ENCODE measurements at regions of chr1 and their contacts with region 1.

Region 1: GRCh38 chr1:75991497-75992114 is 59.4 kb upstream of the ASB17 start:
- DNase-seq: peak; percentile 89
- H3K4me3 Mint-ChIP-seq: no peak overlapping the region
- H3K27ac Mint-ChIP-seq: no peak overlapping the region
- H3K4me1 Mint-ChIP-seq: no peaks in the 10 kb centered on the region
- H3K27me3 Mint-ChIP-seq: peaks cover 12% of the 10 kb centered on the region
- CTCF ChIP-seq: peak; percentile 57

Region 2: GRCh38 chr1:75908717-75909152 is 82.9 kb before region 1 on chr1:
- CTCF ChIA-PET with region 1: no interaction called
- intact Hi-C with region 1: loop called (anchors 2 kb)
- DNase-seq: peak; percentile 39
- H3K4me3 Mint-ChIP-seq: no peak overlapping the region
- H3K27ac Mint-ChIP-seq: no peak overlapping the region
- H3K4me1 Mint-ChIP-seq: no peaks in the 10 kb centered on the region
- H3K27me3 Mint-ChIP-seq: no peaks in the 10 kb centered on the region
- CTCF ChIP-seq: peak; percentile 23